ENCODE measurements at regions of chr16 and their contacts with region 1.

Region 1: DNA sequence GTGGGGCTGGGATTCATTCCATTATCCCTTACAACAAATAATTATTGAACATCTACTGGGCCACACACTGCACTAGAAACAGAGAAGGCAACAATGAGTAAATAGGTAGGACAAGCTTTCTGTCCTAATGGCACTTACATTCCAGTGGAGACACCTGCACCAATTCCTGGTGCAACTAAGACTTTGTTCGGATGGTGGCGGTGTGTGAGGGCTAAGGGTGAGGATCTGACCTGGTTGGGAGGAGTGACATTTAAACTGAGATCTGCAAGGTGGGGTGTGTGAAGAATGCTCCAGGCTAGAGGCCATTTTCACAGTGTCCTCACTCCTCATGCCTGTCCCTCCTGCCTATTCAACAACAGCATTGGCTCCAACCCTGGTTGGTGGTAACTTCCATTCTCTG is 510.0 kb downstream of the XYLT1 start:
- DNase-seq: no peak
- ATAC-seq: no peak
- H3K4me3 ChIP-seq: no peak overlapping the region
- H3K27ac ChIP-seq: no peak overlapping the region
- H3K4me1 ChIP-seq: no peaks in the 10 kb centered on the region
- H3K27me3 ChIP-seq: peaks cover 0 to 32% (median 17%) of the 10 kb centered on the region in 7 donors
- CTCF ChIP-seq: no peak

Region 2: DNA sequence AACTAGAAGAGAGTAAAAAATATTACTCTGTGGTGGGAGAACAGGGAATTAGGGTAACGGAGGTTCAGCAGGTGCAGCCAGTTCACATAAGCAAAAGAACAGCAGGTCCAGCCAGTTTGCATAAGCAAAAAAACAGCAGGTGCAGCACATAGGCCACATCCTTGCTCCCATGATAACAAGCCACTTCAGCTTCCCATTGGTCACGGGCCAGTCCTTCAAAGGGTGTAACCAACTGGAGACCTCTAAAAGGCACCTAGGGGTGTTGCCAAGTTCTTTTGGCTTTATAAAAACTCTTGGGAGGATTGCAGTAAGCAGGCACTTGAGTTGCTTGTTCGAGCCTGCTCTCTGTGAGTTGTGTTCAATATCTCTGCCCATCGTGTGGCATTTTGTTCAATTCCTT is 21.8 kb after region 1 on chr16:
- intact Hi-C with region 1: loop called in 1 of 10 experiments (anchors 2 kb)
- DNase-seq: no peak
- ATAC-seq: no peak
- H3K4me3 ChIP-seq: no peak overlapping the region
- H3K27ac ChIP-seq: no peak overlapping the region
- H3K4me1 ChIP-seq: no peaks in the 10 kb centered on the region
- H3K27me3 ChIP-seq: peaks cover 0 to 13% (median 0%) of the 10 kb centered on the region in 7 donors
- CTCF ChIP-seq: no peak

Measured in heart right ventricle (tissue), 16 donors.